Lower leg skin (tissue), 4 donors: ENCODE measurements at regions of chr12 and their contacts with region 1.

Region 1: GRCh38 chr12:111732786-111733185 is 33.9 kb upstream of the ALDH2 start:
- DNase-seq: no peak
- H3K4me3 ChIP-seq: no peak overlapping the region
- CTCF ChIP-seq: no peak
- POLR2A ChIP-seq: no peak

Region 2: GRCh38 chr12:111773801-111774551 is 41.2 kb after region 1 on chr12:
- intact Hi-C with region 1: loop called (anchors 1 kb)
- DNase-seq: peak; percentile 91 to 96
- H3K4me3 ChIP-seq: no peak overlapping the region
- CTCF ChIP-seq: no peak
- POLR2A ChIP-seq: no peak